T-cell (primary cell): ENCODE measurements at regions of chr18 and their contacts with region 1.

Region 1: DNA sequence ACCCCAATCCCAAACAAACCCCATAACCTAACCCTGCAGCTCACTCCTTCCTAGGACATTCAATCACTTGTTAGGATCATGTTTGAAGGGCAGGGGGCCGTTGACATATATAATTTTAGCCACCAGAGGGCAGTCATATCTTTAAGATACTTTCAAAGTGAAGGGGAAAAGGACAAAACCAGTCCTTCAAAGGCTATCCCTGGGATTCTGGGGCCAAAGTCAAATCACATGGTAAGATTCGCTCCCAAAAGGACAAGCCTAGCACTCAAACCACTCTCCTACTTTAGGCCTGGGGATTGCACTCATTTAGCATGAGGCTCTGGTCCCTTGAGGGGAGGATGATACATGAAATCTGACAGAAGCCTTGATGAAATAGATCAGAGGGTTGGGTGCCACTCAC is 44.6 kb downstream of the HAUS1 start:
- DNase-seq: peak in 24 of 35 experiments; percentile 15 to 73 (median 34)
- ATAC-seq: peak; percentile 60 to 69 (median 66)
- H3K4me3 ChIP-seq: no peak overlapping the region
- H3K4me3 Mint-ChIP-seq: peak overlapping the region in 1 of 3 donors; percentile 9
- H3K27ac ChIP-seq: no peak overlapping the region
- H3K27ac Mint-ChIP-seq: peak overlapping the region; percentile 61 to 69
- H3K4me1 ChIP-seq: peaks cover 0 to 37% of the 10 kb centered on the region in 2 experiments
- H3K4me1 Mint-ChIP-seq: peaks cover 37 to 49% (median 46%) of the 10 kb centered on the region in 3 donors
- H3K27me3 ChIP-seq: no peaks in the 10 kb centered on the region
- H3K27me3 Mint-ChIP-seq: no peaks in the 10 kb centered on the region

Region 2: DNA sequence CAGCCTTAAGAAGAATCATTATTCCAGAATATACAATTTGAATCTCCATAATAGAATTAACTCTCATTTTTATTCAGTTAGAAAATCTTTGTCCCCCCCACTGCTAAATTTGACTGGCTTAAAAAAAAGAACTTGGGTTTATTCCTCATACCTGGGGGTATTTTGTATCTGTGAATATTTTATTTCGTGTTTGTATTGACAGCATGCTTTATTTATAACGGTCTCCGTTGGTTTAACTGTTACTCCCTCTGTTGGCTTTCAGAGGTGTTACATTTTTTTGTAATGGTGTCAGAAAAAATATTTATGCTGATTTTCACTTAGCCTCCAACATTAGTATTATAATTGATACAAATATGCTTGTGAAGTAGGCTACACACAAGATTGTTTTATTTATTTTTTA is 64.5 kb after region 1 on chr18:
- CTCF ChIA-PET with region 1: interaction called, 3 to 9 read pairs
- POLR2A ChIA-PET with region 1: interaction called, 3 to 10 read pairs
- DNase-seq: peak in 1 of 35 experiments; percentile 56
- ATAC-seq: peak in 1 of 4 experiments; percentile 45
- H3K4me3 ChIP-seq: no peak overlapping the region
- H3K4me3 Mint-ChIP-seq: no peak overlapping the region
- H3K27ac ChIP-seq: no peak overlapping the region
- H3K27ac Mint-ChIP-seq: no peak overlapping the region
- H3K4me1 ChIP-seq: peaks cover 15 to 19% of the 10 kb centered on the region in 2 experiments
- H3K4me1 Mint-ChIP-seq: peaks cover 86 to 89% (median 87%) of the 10 kb centered on the region in 3 donors
- H3K27me3 ChIP-seq: no peaks in the 10 kb centered on the region
- H3K27me3 Mint-ChIP-seq: no peaks in the 10 kb centered on the region

Region 3: DNA sequence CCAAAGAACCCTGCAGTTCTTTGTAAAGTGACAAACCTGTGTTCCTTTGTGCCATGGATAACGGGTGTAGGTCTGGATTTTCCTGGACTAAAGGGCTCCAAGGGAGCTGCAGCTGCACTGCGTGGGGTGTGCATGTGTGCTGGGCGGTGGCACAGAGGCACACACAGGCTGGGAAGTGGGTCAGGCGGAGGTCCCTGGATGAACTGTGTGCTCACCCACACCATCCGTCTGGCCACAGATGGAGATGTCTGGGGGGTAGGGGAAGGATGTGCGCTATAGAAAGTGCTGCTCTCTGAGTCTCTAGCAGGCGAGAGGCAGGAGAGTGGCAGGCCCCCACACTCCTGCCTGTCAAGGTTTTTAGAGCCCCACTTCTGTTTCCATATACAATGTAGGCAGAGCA is 371.1 kb after region 1 on chr18:
- CTCF ChIA-PET with region 1: no interaction called
- POLR2A ChIA-PET with region 1: no interaction called
- DNase-seq: no peak
- ATAC-seq: no peak
- H3K4me3 ChIP-seq: no peak overlapping the region
- H3K4me3 Mint-ChIP-seq: no peak overlapping the region
- H3K27ac ChIP-seq: no peak overlapping the region
- H3K27ac Mint-ChIP-seq: no peak overlapping the region
- H3K4me1 ChIP-seq: no peaks in the 10 kb centered on the region
- H3K4me1 Mint-ChIP-seq: no peaks in the 10 kb centered on the region
- H3K27me3 ChIP-seq: peaks cover 0 to 21% of the 10 kb centered on the region in 2 experiments
- H3K27me3 Mint-ChIP-seq: peaks cover 3 to 16% of the 10 kb centered on the region in 2 donors